ENCODE measurements at regions of chr17 and their contacts with region 1.

Region 1: GRCh38 chr17:76681222-76682137 is 29.3 kb downstream of the MXRA7 start:
- DNase-seq: peak; percentile 89
- H3K4me3 ChIP-seq: no peak overlapping the region; a peak in 1 of 4 replicates
- H3K27ac ChIP-seq: peak overlapping the region in 1 of 2 experiments; percentile 23; a peak in 1 of 4 replicates
- H3K4me1 ChIP-seq: peaks cover 0 to 23% of the 10 kb centered on the region in 2 experiments; a peak in 1 of 4 replicates
- H3K27me3 ChIP-seq: no peaks in the 10 kb centered on the region
- CTCF ChIP-seq: peak; percentile 95
- EP300 ChIP-seq: no peak
- RAD21 ChIP-seq: peak; percentile 95

Region 2: DNA sequence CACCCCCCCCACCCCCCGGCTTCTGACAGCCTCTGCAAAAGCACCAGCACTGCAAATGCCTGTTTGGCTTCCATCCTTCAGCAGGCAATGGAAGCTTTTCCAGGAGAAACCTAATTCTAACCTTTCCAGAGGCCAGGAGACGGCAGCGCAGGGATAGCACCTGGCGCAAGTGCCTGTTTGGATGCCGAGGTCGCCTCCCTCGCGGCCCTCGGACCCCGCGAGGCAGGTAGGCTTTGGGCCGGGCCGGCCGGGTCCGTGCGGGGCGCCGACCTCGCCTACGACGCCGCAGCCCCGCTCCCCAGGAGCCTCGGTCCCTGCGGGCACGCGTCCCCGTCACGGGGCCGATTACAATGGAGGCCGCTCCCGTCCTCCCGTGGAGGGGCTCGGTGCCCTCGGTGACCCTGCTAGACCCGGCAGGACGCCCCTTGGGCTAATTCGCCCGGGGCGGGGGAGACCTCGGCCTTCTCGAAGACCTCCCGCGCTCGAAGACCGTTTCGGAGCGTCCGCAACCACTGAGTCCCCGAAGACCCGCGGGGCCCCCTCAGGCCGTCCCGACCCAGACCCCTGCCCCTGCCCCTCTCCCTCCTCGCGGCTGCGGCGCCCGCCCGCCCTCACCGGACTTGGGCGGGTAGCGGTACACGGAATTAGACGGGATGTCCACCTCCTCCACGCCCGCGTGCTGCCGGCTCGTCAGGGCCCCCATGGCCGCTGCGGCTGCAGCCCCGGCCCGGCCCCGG is 441.8 kb before region 1 on chr17:
- CTCF ChIA-PET with region 1: no interaction called
- POLR2A ChIA-PET with region 1: no interaction called
- DNase-seq: peak; percentile 77
- H3K4me3 ChIP-seq: peak overlapping the region; percentile 57 to 62
- H3K27ac ChIP-seq: no peak overlapping the region
- H3K4me1 ChIP-seq: peaks cover 0 to 15% of the 10 kb centered on the region in 2 experiments; a peak in 1 of 4 replicates
- H3K27me3 ChIP-seq: no peaks in the 10 kb centered on the region
- CTCF ChIP-seq: no peak
- EP300 ChIP-seq: no peak
- RAD21 ChIP-seq: no peak

Region 3: GRCh38 chr17:76547184-76547641 is 134.3 kb before region 1 on chr17:
- CTCF ChIA-PET with region 1: interaction called, 40 read pairs
- POLR2A ChIA-PET with region 1: interaction called, 6 read pairs
- DNase-seq: peak; percentile 83
- H3K4me3 ChIP-seq: peak overlapping the region in 1 of 2 experiments; percentile 11; a peak in 2 of 4 replicates
- H3K27ac ChIP-seq: peak overlapping the region; percentile 57 to 99
- H3K4me1 ChIP-seq: peaks cover 25 to 56% of the 10 kb centered on the region in 2 experiments
- H3K27me3 ChIP-seq: peaks cover 9% of the 10 kb centered on the region; the same call in 1 of the 2 replicates
- CTCF ChIP-seq: peak; percentile 92
- EP300 ChIP-seq: peak in 1 of 2 experiments; percentile 7; a peak in 1 of 4 replicates
- RAD21 ChIP-seq: peak; percentile 99

Region 4: DNA sequence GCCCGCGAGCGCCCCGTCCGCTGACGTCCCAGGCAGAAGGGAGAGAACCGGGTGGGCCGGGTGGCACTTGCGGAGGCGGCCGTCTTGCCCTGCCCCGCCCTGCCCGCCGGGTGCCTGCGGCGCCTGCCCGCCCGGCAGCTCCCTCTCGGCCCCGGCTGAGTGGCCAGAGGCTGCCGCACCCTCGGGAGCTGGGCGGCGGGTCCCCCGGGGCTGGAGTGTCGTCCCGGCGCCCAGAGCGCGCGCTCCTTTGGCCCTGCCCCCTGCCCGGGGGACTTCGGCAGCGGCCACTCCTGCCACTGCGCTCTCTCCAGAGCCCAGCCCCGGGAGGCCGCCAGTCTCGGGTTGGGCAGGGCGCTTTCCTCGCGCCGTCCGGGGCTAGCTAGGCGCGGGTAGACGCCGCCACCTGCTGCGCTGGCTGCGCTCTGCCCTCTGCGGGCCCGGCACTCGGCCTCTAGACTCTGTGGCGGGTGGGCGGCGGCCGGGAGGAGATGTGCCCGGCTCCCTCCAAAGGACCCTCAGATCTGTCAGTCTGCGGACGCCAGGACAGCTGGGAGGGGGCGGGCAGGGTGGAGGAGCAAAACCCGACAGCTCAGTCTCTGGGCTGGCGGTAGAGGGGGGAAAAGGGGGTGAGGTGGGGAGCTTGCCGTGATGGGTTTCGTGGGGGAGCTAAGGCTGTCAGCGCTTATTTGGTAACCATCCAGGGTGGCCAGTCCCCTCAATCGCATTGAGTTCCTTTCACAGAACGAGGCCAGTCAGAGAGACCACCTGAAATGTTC is 95.5 kb before region 1 on chr17 and contains the start of gene ST6GALNAC2:
- CTCF ChIA-PET with region 1: interaction called, 13 read pairs
- POLR2A ChIA-PET with region 1: no interaction called
- DNase-seq: peak; percentile 94
- H3K4me3 ChIP-seq: peak within 1 kb of the TSS; percentile 46 to 57
- H3K27ac ChIP-seq: no peak within 1 kb of the TSS
- H3K4me1 ChIP-seq: peaks cover 0 to 9% of the 10 kb centered on the region in 2 experiments; a peak in 1 of 4 replicates
- H3K27me3 ChIP-seq: peaks cover 37% of the 10 kb centered on the region
- CTCF ChIP-seq: peak; percentile 38
- EP300 ChIP-seq: no peak
- RAD21 ChIP-seq: peak; percentile 65
- polyA plus RNA-seq, gene ST6GALNAC2: 0.57 and 0.94 TPM in 2 replicates

Region 5: GRCh38 chr17:76659928-76660614 is 21.4 kb before region 1 on chr17:
- CTCF ChIA-PET with region 1: interaction called, 15 read pairs
- POLR2A ChIA-PET with region 1: no interaction called
- DNase-seq: peak; percentile 73
- H3K4me3 ChIP-seq: no peak overlapping the region
- H3K27ac ChIP-seq: no peak overlapping the region
- H3K4me1 ChIP-seq: peaks cover 0 to 10% of the 10 kb centered on the region in 2 experiments; a peak in 1 of 4 replicates
- H3K27me3 ChIP-seq: no peaks in the 10 kb centered on the region
- CTCF ChIP-seq: no peak
- EP300 ChIP-seq: peak in 1 of 2 experiments; percentile 63; a peak in 1 of 4 replicates
- RAD21 ChIP-seq: peak; percentile 14; the same call in 1 of the 2 replicates

Region 6: DNA sequence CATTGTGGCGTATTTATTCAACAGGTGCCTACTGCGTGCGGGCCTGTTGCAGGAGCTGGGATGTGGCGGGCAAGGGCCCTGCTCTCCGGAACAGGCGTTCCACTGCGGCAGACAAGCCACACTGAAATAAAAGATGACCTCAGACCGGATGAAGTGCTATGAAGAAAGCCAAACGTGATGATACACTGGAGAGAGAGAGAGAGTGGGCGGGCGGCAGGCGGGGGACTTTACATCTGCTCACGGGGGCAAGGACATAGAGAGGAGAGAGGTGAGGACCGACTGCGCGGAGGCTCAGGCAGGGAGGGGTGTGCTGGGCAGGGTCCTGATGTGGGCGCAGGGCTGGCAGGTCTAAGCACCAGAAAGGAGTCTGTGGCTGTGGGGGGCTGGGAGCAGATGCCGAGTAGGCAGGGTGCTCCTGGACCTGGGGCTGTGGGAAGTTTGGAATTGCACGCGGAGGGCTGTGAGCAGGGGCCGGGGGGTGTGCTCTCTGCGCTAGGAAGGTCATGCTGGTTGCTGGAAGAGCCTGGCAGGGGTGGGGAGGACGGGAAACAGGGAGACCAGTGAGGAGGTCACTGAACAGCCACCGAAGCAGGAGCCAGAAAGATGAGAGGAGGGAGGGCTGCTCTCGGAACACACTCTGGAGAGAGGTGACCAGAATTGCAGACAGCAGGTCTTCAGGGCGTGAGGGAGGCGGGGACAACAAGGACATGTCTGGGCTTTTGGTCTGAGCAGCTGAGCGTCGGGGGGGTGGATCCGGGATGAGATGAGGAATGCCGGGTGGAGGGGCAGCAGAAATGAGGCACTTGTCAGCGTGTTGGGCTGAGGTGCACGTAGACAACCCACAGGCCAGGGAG is 19.4 kb after region 1 on chr17:
- CTCF ChIA-PET with region 1: interaction called, 69 read pairs
- POLR2A ChIA-PET with region 1: interaction called, 8 read pairs
- DNase-seq: peak; percentile 85
- H3K4me3 ChIP-seq: peak overlapping the region; percentile 24 to 50
- H3K27ac ChIP-seq: peak overlapping the region; percentile 78 to 84
- H3K4me1 ChIP-seq: peaks cover 26 to 45% of the 10 kb centered on the region in 2 experiments
- H3K27me3 ChIP-seq: no peaks in the 10 kb centered on the region
- CTCF ChIP-seq: no peak
- EP300 ChIP-seq: no peak; a peak in 1 of 4 replicates
- RAD21 ChIP-seq: no peak

Region 7: GRCh38 chr17:76726231-76726775 is 44.8 kb after region 1 on chr17 and contains the start of gene JMJD6:
- CTCF ChIA-PET with region 1: interaction called, 11 read pairs
- POLR2A ChIA-PET with region 1: interaction called, 6 read pairs
- DNase-seq: peak; percentile 99
- H3K4me3 ChIP-seq: peak within 1 kb of the TSS; percentile 74 to 99
- H3K27ac ChIP-seq: peak within 1 kb of the TSS; percentile 94 to 96
- H3K4me1 ChIP-seq: peaks cover 14 to 20% of the 10 kb centered on the region in 2 experiments
- H3K27me3 ChIP-seq: no peaks in the 10 kb centered on the region
- CTCF ChIP-seq: no peak
- EP300 ChIP-seq: no peak
- RAD21 ChIP-seq: no peak
- polyA plus RNA-seq, gene JMJD6: 20.1 and 23.3 TPM in 2 replicates